Prostate gland (tissue), 2 donors: ENCODE measurements at regions of chr4 and their contacts with region 1.

Region 1: DNA sequence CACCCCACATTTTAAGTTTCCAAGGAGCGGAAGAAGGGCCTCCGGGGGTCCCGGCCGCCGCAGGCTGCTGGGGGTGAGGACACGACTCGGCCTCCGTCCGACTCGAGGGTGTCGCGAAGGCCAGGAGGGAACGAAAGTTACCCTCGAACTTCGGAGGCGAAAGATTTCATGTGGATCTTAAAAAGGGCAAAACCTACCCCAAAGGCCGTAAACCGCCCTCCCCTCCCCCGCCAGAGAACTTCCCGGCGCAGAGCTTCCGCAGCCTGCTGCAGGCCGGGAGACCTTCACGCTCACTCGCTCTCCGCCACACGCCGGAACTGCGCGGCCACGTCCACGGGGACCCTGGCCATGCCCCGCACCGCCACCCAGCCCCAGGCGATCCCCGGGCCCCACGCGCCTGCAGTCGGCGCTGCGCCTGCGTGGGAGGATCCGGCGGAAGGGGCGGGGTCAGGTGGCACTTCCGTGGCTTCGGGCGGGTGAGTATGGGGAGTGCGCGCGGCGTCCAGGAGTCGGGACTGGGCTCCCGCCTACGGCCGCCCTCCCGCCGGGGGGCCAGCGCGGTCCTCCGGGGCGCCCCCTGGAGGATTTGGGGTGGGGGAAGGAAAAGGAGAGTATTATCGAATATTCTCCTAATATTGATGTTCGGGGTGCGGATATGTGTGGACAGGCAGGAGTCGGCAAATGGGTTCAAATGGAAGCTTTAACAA is at the start of gene MMAA:
- DNase-seq: peak; percentile 93
- H3K4me3 ChIP-seq: peak within 1 kb of the TSS; percentile 67 to 78
- H3K27ac ChIP-seq: peak within 1 kb of the TSS; percentile 88 to 95
- H3K4me1 ChIP-seq: no peaks in the 10 kb centered on the region
- H3K27me3 ChIP-seq: no peaks in the 10 kb centered on the region
- CTCF ChIP-seq: peak in 3 of 4 experiments; percentile 60 to 77 (median 65)
- POLR2A ChIP-seq: peak; percentile 90
- total RNA-seq, gene MMAA: 3.6 TPM

Region 2: DNA sequence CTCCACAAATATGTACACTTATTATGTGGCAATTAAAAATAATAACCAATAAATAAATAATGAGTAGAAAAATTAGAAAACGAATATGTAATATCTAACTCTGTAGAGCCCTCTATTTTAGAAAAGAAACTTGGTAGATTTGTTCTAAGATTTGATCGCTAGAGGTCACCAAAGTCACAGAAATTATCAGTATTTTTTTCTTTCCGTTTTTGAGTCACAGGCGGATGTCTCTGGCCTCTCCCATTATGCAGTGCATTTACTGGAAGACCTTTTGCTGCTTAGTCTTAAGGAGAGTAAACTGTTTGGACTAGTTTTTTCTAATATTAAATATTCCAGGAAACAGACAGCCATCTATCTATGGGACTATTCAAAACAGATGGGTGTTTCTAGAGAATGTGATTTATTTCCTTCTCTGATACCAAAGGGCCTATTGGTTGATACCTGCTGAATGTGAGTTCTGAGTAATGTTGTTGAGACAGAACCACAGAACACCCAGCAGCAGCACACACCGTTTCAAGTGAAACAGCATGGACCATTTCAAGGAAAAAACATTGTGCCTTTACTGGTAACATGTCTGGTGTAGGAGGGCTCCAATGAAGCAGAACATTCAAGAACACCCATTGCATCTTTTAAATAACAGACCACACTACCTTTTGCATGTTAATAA is 1444.6 kb before region 1 on chr4:
- intact Hi-C with region 1: loop called (anchors 10 kb)
- DNase-seq: peak; percentile 13
- H3K4me3 ChIP-seq: no peak overlapping the region
- H3K27ac ChIP-seq: no peak overlapping the region
- H3K4me1 ChIP-seq: no peaks in the 10 kb centered on the region
- H3K27me3 ChIP-seq: no peaks in the 10 kb centered on the region
- CTCF ChIP-seq: peak in 3 of 4 experiments; percentile 36 to 54 (median 54)
- POLR2A ChIP-seq: no peak

Region 3: DNA sequence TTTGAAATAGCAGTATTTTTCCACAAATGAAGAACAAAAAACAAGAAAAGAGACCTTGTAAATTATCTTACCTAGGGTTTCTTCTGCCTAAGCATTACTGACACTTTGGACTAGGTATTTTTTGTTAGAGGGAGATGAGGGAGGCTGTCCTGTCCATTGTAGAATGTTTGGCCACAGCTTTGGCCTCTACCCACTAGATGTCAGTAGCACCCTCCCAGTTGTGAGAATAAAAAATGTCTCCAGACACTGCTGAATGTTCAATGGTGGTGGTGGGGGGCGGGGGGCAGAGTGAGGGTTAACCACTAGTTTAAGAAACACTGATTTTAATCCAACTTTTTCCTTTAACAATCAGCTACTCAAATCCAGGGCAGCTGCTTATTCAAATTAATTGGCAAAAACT is 464.5 kb before region 1 on chr4:
- intact Hi-C with region 1: loop called (anchors 10 kb)
- DNase-seq: no peak
- H3K4me3 ChIP-seq: no peak overlapping the region
- H3K27ac ChIP-seq: no peak overlapping the region
- H3K4me1 ChIP-seq: no peaks in the 10 kb centered on the region
- H3K27me3 ChIP-seq: no peaks in the 10 kb centered on the region
- CTCF ChIP-seq: peak in 2 of 4 experiments; percentile 13 to 17
- POLR2A ChIP-seq: no peak

Region 4: GRCh38 chr4:145481164-145481941 is 137.7 kb before region 1 on chr4 and contains the start of gene SMAD1:
- intact Hi-C with region 1: loop called (anchors 5 kb)
- DNase-seq: peak; percentile 83
- H3K4me3 ChIP-seq: peak within 1 kb of the TSS; percentile 83 to 97
- H3K27ac ChIP-seq: peak within 1 kb of the TSS; percentile 96 to 98
- H3K4me1 ChIP-seq: no peaks in the 10 kb centered on the region
- H3K27me3 ChIP-seq: no peaks in the 10 kb centered on the region
- CTCF ChIP-seq: peak in 2 of 4 experiments; percentile 10 to 16
- POLR2A ChIP-seq: peak; percentile 60
- total RNA-seq, gene SMAD1: 21.5 to 34.3 TPM

Region 5: DNA sequence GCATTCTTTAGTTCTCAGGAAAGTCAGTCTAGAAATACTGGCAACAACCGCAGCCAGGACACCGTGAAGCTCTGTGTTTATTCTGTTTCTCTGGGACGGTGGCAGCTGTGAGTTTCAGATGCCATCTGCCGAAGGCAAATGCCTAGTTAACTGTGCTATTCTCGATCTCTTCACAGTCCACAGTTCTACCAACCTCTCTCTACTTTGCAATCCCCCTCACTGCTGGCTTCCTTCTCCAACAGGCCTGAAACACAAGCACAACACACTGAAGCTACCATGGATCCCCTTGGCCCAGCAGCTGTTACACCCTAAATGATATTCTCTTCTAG is 200.7 kb after region 1 on chr4:
- intact Hi-C with region 1: loop called (anchors 5 kb)
- DNase-seq: peak; percentile 20
- H3K4me3 ChIP-seq: no peak overlapping the region
- H3K27ac ChIP-seq: no peak overlapping the region
- H3K4me1 ChIP-seq: no peaks in the 10 kb centered on the region
- H3K27me3 ChIP-seq: no peaks in the 10 kb centered on the region
- CTCF ChIP-seq: peak in 1 of 4 experiments; percentile 21
- POLR2A ChIP-seq: no peak

Region 6: GRCh38 chr4:145936142-145936996 is 317.3 kb after region 1 on chr4:
- intact Hi-C with region 1: loop called (anchors 2 kb)
- DNase-seq: peak; percentile 58
- H3K4me3 ChIP-seq: peak overlapping the region; percentile 72 to 79
- H3K27ac ChIP-seq: peak overlapping the region; percentile 96 to 97
- H3K4me1 ChIP-seq: peaks cover 6% of the 10 kb centered on the region
- H3K27me3 ChIP-seq: no peaks in the 10 kb centered on the region
- CTCF ChIP-seq: peak in 1 of 4 experiments; percentile 16
- POLR2A ChIP-seq: peak; percentile 25